ENCODE measurements at regions of chr3 and their contacts with region 1.

Region 1: GRCh38 chr3:184005941-184006507 is 11.7 kb downstream of the ABCC5 start:
- DNase-seq: no peak

Region 2: DNA sequence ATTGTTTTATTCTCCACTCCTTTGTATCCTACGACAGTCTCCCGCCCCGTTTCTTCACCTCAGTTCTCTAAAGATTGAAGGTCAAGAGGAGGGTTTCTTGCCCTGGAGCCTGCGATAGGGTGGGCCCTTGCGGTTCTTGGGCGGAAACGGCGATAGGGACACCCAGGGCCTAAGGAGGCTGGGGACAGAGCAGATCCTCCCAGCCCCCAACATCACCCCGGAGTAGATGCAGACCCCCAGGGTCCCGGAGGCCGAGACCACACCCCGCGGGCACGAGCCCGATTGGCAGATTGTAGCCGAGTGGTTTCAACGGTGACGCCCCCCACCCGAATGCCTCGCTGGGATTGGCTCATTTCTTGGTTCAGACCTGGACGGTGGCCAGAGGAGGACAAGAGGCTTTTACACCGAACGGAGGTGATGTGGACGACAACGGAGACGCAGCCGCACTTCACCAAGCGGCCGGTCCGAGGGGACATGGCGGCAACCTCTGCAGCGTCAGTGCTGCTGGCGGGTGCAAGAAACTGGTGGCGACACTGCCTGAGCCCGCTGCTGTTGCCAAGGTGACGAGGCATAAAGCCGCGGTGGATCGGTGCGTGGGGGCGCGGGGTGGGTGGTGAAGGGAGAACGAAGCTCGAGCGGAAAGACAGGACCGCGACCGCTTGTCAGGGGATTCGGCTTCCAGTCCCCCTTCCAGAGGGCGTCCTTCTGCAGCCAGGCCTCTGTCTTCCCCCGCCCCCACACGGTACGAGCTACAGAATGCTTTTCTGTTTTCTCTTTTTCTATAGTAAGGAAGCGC is 558.6 kb before region 1 on chr3:
- intact Hi-C with region 1: no loop called
- DNase-seq: peak; percentile 93

Region 3: DNA sequence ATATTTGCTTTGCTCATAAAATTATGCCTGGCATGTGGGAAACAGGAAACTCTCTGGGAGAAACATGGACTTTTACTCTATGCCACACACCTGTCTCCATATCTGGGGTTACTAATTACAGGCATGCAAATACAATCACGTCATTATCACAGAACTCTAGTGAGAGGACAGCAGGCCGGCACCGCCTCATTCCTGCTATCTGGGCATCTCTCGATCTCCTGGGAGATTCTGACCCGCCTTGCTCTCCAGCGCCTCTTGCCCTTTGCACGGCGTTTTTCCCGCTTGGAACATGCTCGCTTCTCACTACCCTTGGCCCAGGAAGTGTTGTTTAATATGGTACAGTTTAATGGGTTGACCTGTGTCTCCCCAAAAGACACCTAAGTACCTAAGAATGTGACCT is 75.9 kb before region 1 on chr3:
- intact Hi-C with region 1: loop called (anchors 5 kb)
- DNase-seq: no peak

Region 4: GRCh38 chr3:183975981-183976662 is 29.9 kb before region 1 on chr3:
- intact Hi-C with region 1: no loop called
- DNase-seq: no peak

Region 5: GRCh38 chr3:184066211-184066610 is 60.2 kb after region 1 on chr3:
- intact Hi-C with region 1: no loop called
- DNase-seq: no peak